ENCODE measurements at regions of chr20 and their contacts with region 1.

Region 1: DNA sequence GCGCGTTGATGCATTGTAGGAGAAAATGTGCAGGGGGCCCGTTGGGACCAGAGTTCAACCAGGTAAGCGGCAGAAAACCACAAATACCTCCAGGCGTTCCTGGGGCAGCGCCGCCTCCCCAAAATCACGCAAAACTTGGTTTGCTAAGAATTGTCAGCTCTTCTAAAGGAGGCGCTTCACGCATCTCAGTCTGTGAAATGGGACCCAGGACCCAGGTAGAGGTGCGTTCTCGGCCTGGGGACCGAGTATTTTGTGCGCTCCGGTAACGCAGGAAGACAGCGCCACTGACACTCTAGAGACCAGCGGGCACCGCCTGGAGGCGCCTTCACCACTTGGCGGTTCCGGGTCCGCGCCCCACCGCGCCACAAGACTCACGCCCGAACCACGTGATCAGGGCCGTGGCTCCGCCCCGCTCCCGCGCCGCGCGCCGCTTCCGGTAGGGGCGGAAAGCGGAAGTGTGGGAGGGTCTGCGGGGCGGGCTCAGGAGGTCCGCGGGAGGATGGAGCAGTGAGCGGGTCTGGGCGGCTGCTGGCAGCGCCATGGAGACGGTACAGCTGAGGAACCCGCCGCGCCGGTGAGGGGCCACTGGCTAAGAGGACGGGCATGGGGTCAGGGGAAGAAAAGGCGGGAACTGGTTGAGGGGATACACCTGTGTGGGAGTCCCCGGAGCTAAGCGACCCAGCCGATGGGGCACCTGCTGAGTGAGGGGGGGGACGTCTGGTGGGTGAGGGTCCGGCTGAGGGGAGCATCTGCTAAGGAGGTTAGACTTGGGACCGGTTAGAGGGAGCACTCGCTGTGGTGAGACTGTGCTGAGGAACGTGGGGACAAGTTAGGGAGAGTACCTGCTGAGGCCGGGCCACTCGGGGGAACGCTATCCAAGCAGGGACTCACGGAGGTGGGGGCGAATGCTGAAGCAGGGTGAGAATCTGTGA is at the start of gene STK4:
- DNase-seq: peak; percentile 90 to 99 (median 96)
- ATAC-seq: peak; percentile 76
- H3K4me3 ChIP-seq: peak within 1 kb of the TSS; percentile 96 to 97
- H3K4me3 Mint-ChIP-seq: peak within 1 kb of the TSS; percentile 91
- H3K27ac ChIP-seq: peak within 1 kb of the TSS; percentile 82 to 93
- H3K27ac Mint-ChIP-seq: peak within 1 kb of the TSS; percentile 89
- H3K4me1 ChIP-seq: peaks cover 28% of the 10 kb centered on the region
- H3K4me1 Mint-ChIP-seq: peaks cover 51% of the 10 kb centered on the region
- H3K27me3 ChIP-seq: no peaks in the 10 kb centered on the region
- H3K27me3 Mint-ChIP-seq: no peaks in the 10 kb centered on the region
- CTCF ChIP-seq: no peak
- total RNA-seq, gene STK4: 253 to 259 TPM

Region 2: GRCh38 chr20:44692932-44693476 is 273.3 kb before region 1 on chr20:
- CTCF ChIA-PET with region 1: no interaction called
- POLR2A ChIA-PET with region 1: no interaction called
- intact Hi-C with region 1: no loop called
- DNase-seq: no peak
- ATAC-seq: no peak
- H3K4me3 ChIP-seq: no peak overlapping the region
- H3K4me3 Mint-ChIP-seq: no peak overlapping the region
- H3K27ac ChIP-seq: no peak overlapping the region
- H3K27ac Mint-ChIP-seq: no peak overlapping the region
- H3K4me1 ChIP-seq: no peaks in the 10 kb centered on the region
- H3K4me1 Mint-ChIP-seq: no peaks in the 10 kb centered on the region
- H3K27me3 ChIP-seq: no peaks in the 10 kb centered on the region
- H3K27me3 Mint-ChIP-seq: no peaks in the 10 kb centered on the region
- CTCF ChIP-seq: no peak

Region 3: DNA sequence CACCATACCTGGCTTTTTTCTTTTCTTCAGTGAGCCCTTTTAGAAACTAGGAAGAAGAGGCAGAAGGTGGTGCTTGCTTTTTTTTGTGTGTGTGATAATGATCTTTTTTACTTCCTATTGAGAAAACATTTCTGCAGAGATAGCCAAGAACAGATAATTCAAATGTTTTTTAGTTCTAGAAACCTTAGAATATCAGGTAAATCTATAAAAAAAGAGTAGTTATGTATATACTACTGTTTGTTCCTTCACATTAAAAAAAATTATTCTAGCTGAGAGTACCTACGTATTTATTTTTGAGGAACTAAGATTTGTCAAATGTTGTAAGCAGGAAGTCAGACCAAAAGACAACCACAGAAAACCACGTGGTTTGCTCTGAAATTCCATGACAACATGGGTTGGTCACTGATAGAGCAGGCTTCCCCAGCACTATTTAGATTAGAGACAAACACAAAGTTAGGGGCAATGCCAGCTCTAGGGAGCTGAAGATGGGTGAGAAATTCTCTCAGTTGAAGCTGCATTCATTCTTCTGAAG is 12.9 kb after region 1 on chr20:
- CTCF ChIA-PET with region 1: interaction called, 29 read pairs
- POLR2A ChIA-PET with region 1: interaction called, 60 read pairs
- intact Hi-C with region 1: loop called (anchors 1 kb)
- DNase-seq: peak in 8 of 9 experiments; percentile 54 to 95 (median 72)
- ATAC-seq: peak; percentile 83
- H3K4me3 ChIP-seq: peak overlapping the region; percentile 4 to 36
- H3K4me3 Mint-ChIP-seq: peak overlapping the region; percentile 68
- H3K27ac ChIP-seq: peak overlapping the region; percentile 87 to 95
- H3K27ac Mint-ChIP-seq: peak overlapping the region; percentile 94
- H3K4me1 ChIP-seq: peaks cover 70% of the 10 kb centered on the region
- H3K4me1 Mint-ChIP-seq: peaks cover 83% of the 10 kb centered on the region
- H3K27me3 ChIP-seq: no peaks in the 10 kb centered on the region
- H3K27me3 Mint-ChIP-seq: no peaks in the 10 kb centered on the region
- CTCF ChIP-seq: no peak

Region 4: GRCh38 chr20:45011108-45011526 is 44.8 kb after region 1 on chr20:
- CTCF ChIA-PET with region 1: interaction called, 8 read pairs
- POLR2A ChIA-PET with region 1: interaction called, 3 read pairs
- intact Hi-C with region 1: loop called in 1 of 2 experiments (anchors 5 kb)
- DNase-seq: peak in 8 of 9 experiments; percentile 14 to 74 (median 57)
- ATAC-seq: peak; percentile 66
- H3K4me3 ChIP-seq: no peak overlapping the region
- H3K4me3 Mint-ChIP-seq: no peak overlapping the region
- H3K27ac ChIP-seq: peak overlapping the region in 1 of 2 experiments; percentile 29
- H3K27ac Mint-ChIP-seq: peak overlapping the region; percentile 35
- H3K4me1 ChIP-seq: peaks cover 23% of the 10 kb centered on the region
- H3K4me1 Mint-ChIP-seq: peaks cover 70% of the 10 kb centered on the region
- H3K27me3 ChIP-seq: no peaks in the 10 kb centered on the region
- H3K27me3 Mint-ChIP-seq: no peaks in the 10 kb centered on the region
- CTCF ChIP-seq: peak; percentile 74

Measured in CD8-positive, alpha-beta T cell (primary cell).